Activated CD4-positive, alpha-beta T cell treated with anti-CD3 and anti-CD28 coated beads, Interleukin-2, amount 10 ng/mL, durations not matched to agents 24 days and 14 days (primary cell): ENCODE measurements at regions of chr12 and their contacts with region 1.

Region 1: GRCh38 chr12:53180220-53180930 is at the starts of genes CSAD and ZNF740:
- DNase-seq: peak; percentile 99
- H3K4me3 Mint-ChIP-seq: peak within 1 kb of the TSS; percentile 96
- H3K27ac Mint-ChIP-seq: peak within 1 kb of the TSS; percentile 95
- H3K4me1 Mint-ChIP-seq: peaks cover 48% of the 10 kb centered on the region
- H3K27me3 Mint-ChIP-seq: no peaks in the 10 kb centered on the region
- total RNA-seq, gene CSAD: 21.6 and 25.6 TPM in 2 replicates
- total RNA-seq, gene ZNF740: 44.0 and 50.5 TPM in 2 replicates

Region 2: DNA sequence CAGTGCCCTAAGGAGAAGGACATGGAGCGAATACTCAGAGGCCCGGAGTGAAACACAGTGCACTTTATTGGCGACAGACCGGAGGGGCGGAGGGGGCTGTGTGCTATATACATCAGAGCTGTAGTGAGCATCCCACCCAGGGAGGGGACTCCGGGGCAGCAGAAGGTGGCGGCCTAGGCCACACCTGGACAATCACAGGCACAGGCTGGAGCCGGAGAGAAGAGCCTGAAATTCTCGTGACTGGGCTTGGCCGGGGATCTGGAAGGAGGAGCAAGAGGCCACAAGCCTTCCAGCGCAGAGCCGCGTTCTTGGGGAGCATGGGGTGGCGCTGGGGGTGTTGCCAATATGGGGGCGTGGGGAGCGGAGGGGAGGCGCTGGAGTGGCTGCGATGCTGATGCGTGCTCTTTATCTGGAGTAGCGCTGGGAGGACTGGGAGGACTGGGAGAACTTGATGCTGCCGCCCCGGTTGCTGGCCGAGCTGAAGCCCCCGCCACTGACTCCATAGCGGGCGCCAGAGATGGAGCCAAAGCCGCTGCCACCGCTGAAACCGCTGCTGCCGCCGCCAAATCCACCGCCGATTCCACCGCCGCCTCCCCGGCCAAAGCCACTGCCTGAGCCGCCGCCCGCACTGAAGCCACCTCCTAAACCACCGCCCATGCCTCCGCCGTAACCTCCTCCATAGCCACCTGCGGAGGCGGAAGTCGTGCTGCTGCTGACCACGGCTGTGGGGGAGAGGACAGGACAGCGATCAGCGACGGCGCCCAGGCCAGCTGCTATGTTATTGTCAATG is 390.5 kb before region 1 on chr12:
- intact Hi-C with region 1: no loop called
- DNase-seq: no peak
- H3K4me3 Mint-ChIP-seq: no peak overlapping the region
- H3K27ac Mint-ChIP-seq: no peak overlapping the region
- H3K4me1 Mint-ChIP-seq: peaks cover 10% of the 10 kb centered on the region
- H3K27me3 Mint-ChIP-seq: peaks cover 34% of the 10 kb centered on the region

Region 3: GRCh38 chr12:53220801-53221202 is 40.4 kb after region 1 on chr12:
- intact Hi-C with region 1: loop called (anchors 1 kb)
- DNase-seq: peak; percentile 96
- H3K4me3 Mint-ChIP-seq: peak overlapping the region; percentile 97
- H3K27ac Mint-ChIP-seq: peak overlapping the region; percentile 90
- H3K4me1 Mint-ChIP-seq: peaks cover 82% of the 10 kb centered on the region
- H3K27me3 Mint-ChIP-seq: peaks cover 1% of the 10 kb centered on the region

Region 4: GRCh38 chr12:53267999-53268647 is 87.7 kb after region 1 on chr12 and contains the start of gene ESPL1:
- intact Hi-C with region 1: loop called (anchors 1 kb)
- DNase-seq: peak; percentile 96
- H3K4me3 Mint-ChIP-seq: peak within 1 kb of the TSS; percentile 89
- H3K27ac Mint-ChIP-seq: peak within 1 kb of the TSS; percentile 92
- H3K4me1 Mint-ChIP-seq: peaks cover 51% of the 10 kb centered on the region
- H3K27me3 Mint-ChIP-seq: no peaks in the 10 kb centered on the region
- total RNA-seq, gene ESPL1: 71.8 and 76.7 TPM in 2 replicates

Region 5: DNA sequence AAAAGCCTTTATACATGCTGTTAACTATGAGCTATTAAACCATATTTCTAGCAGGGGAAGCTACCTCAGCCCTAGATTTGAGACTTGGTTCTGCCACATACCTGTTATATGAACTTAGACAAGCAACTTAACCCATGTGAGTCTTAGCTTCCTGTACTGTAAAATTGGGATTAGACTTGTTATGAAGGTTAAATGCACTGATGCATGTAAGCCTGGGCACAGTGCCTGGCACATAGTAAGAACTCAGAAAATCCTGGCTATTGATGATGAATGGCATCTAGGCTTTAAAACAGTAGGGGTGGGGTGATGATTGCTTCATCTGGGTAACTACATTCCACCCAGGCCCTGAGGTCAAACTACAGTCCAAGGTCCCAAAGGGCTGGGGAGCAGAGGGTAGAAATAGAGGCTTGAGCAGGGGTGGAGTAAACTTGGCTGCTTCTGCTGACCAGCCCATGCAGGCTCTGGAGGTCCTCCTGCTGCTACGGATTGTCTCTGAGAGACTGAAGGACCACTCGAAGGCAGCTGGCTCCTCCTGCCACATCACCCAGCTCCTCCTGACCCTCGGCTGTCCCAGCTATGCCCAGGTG is 99.0 kb after region 1 on chr12:
- intact Hi-C with region 1: no loop called
- DNase-seq: no peak
- H3K4me3 Mint-ChIP-seq: no peak overlapping the region
- H3K27ac Mint-ChIP-seq: no peak overlapping the region
- H3K4me1 Mint-ChIP-seq: peaks cover 6% of the 10 kb centered on the region
- H3K27me3 Mint-ChIP-seq: no peaks in the 10 kb centered on the region

Region 6: DNA sequence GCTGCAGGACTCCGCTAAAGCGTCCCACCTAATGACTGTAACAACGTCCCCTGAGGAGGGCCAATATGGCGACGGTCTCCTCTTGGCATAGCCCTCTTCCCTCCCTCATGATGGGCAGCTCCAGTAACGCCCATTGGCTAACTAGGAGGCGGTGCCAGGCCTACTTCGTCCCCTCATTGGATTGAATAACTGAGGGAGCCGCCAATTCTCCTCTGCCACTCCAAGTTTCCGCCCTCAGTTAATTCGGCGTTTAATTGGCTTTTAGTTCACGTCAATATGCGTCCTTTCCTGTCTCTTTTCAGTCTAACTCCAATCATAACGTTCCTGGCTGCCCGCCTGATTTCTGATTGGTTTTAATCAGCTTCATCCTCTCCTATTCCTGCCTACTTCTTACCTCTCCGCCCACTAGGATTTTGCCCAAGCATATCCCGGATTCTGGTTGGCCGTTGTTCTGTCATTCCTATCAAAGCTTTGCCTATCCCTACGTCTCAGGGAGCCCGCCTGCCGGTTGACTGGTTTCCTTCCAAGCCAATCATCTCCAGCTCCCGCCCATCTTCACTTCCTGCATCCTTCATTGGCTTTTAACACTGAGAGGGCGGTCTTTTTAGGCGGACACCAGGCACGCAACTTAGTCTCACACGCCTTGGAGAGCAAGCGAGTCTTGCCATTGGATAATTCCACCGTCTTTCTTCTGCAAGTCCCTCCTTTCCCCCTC is 199.2 kb after region 1 on chr12:
- intact Hi-C with region 1: loop called (anchors 1 kb)
- DNase-seq: peak; percentile 100
- H3K4me3 Mint-ChIP-seq: no peak overlapping the region
- H3K27ac Mint-ChIP-seq: no peak overlapping the region
- H3K4me1 Mint-ChIP-seq: peaks cover 34% of the 10 kb centered on the region
- H3K27me3 Mint-ChIP-seq: no peaks in the 10 kb centered on the region